PC-9 (cell line): ENCODE measurements at regions of chr20 and their contacts with region 1.

Region 1: GRCh38 chr20:13302647-13303450 is 81.8 kb downstream of the ISM1 start:
- DNase-seq: peak in 1 of 2 experiments; percentile 15
- H3K4me3 ChIP-seq: no peak overlapping the region
- H3K27ac ChIP-seq: no peak overlapping the region
- H3K4me1 ChIP-seq: no peaks in the 10 kb centered on the region
- H3K27me3 ChIP-seq: no peaks in the 10 kb centered on the region
- CTCF ChIP-seq: peak; percentile 76

Region 2: GRCh38 chr20:12970372-12970821 is 332.5 kb before region 1 on chr20:
- CTCF ChIA-PET with region 1: no interaction called
- POLR2A ChIA-PET with region 1: no interaction called
- intact Hi-C with region 1: loop called (anchors 10 kb)
- DNase-seq: no peak
- H3K4me3 ChIP-seq: no peak overlapping the region
- H3K27ac ChIP-seq: no peak overlapping the region
- H3K4me1 ChIP-seq: no peaks in the 10 kb centered on the region
- H3K27me3 ChIP-seq: no peaks in the 10 kb centered on the region
- CTCF ChIP-seq: peak; percentile 63

Region 3: DNA sequence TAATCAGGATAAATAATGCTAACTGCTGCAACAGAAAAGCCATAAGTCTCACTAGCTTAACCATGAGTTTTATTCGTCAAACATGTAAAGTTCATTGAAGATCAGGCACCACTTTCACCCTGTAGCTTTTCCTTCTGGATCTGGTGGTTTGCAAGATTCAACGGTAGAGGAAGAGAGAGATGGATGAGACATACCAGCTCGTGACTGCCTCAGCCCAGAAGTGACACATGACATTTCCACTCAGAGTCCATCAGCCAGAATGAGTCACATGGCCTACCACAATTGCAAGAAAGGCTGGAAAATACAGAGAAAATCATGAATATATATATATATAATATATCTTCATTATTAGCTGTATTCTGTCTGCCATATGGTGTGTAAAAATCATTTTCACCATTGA is 265.1 kb before region 1 on chr20:
- CTCF ChIA-PET with region 1: no interaction called
- POLR2A ChIA-PET with region 1: no interaction called
- intact Hi-C with region 1: no loop called
- DNase-seq: no peak
- H3K4me3 ChIP-seq: no peak overlapping the region
- H3K27ac ChIP-seq: no peak overlapping the region
- H3K4me1 ChIP-seq: no peaks in the 10 kb centered on the region
- H3K27me3 ChIP-seq: no peaks in the 10 kb centered on the region
- CTCF ChIP-seq: no peak

Region 4: GRCh38 chr20:13119583-13119982 is 183.3 kb before region 1 on chr20:
- CTCF ChIA-PET with region 1: interaction called, 10 read pairs
- POLR2A ChIA-PET with region 1: no interaction called
- intact Hi-C with region 1: loop called (anchors 1 kb)
- DNase-seq: peak in 1 of 2 experiments; percentile 20
- H3K4me3 ChIP-seq: no peak overlapping the region
- H3K27ac ChIP-seq: no peak overlapping the region
- H3K4me1 ChIP-seq: no peaks in the 10 kb centered on the region
- H3K27me3 ChIP-seq: no peaks in the 10 kb centered on the region
- CTCF ChIP-seq: peak; percentile 91